Ascending aorta (tissue), 2 donors: ENCODE measurements at regions of chr5 and their contacts with region 1.

Region 1: GRCh38 chr5:78537821-78538220 is 110.8 kb downstream of the LHFPL2 start:
- DNase-seq: peak in 1 of 2 donors; percentile 63
- H3K4me3 ChIP-seq: no peak overlapping the region
- H3K27ac ChIP-seq: no peak overlapping the region
- H3K4me1 ChIP-seq: peaks cover 10 to 37% of the 10 kb centered on the region in 2 donors
- H3K27me3 ChIP-seq: no peaks in the 10 kb centered on the region
- CTCF ChIP-seq: peak; percentile 40 to 64 (median 44)

Region 2: DNA sequence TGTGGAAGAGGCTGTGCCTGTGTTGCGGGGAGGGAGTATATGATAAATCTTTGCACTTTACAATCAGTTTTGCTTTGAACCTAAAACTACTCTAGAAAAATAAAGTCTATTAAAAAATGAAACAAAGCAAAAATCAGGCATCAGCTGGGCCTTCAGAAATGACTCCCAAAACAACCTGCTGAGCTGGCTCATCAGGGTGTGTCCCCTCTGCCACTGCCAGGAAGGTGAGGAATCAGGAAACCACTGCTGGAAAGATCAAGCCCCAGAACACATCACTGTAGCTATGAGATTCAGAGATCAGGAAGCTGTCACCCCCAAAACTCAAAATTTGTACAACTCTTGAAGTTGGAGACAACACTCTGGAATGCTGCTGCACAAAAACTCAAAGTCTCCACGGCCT is 721.1 kb before region 1 on chr5:
- intact Hi-C with region 1: no loop called
- DNase-seq: no peak
- H3K4me3 ChIP-seq: no peak overlapping the region
- H3K27ac ChIP-seq: no peak overlapping the region
- H3K4me1 ChIP-seq: no peaks in the 10 kb centered on the region
- H3K27me3 ChIP-seq: no peaks in the 10 kb centered on the region
- CTCF ChIP-seq: no peak

Region 3: GRCh38 chr5:78467752-78468357 is 70.0 kb before region 1 on chr5:
- intact Hi-C with region 1: loop called (anchors 5 kb)
- DNase-seq: no peak
- H3K4me3 ChIP-seq: no peak overlapping the region
- H3K27ac ChIP-seq: no peak overlapping the region
- H3K4me1 ChIP-seq: no peaks in the 10 kb centered on the region
- H3K27me3 ChIP-seq: no peaks in the 10 kb centered on the region
- CTCF ChIP-seq: peak; percentile 73 to 85 (median 84)

Region 4: DNA sequence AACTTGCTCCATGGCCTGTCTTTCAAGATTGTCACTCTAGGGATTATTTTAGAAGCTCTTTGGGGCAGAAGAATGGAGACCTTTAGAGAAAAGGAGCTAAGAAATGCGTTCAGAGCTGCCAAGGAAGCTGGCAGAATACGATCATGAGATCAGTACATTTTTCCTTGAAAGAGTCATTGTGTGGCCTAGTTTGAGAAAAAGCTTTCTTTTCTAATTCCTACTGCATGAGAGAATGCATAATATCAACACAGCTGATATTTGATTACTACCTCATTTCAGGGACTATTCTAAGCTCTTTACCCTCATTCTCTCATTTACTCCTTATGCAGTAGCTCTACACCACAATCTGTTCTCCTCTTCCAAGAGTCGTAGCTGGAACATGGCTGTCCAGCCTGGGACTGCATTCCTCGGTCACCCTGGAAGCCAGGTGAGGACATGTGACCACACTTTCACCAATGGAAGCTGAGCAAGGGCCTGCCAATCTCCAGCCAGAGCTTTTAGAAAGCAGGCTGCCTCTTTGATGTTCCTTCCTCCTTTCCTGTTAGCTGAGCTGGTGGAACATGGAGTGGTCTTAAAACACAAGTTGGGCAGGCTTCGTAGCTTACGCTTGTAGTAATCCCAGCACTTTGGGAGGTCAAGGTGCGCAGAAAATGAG is 210.0 kb after region 1 on chr5:
- intact Hi-C with region 1: loop called (anchors 5 kb)
- DNase-seq: peak in 1 of 2 donors; percentile 68
- H3K4me3 ChIP-seq: no peak overlapping the region
- H3K27ac ChIP-seq: peak overlapping the region; percentile 79 to 92
- H3K4me1 ChIP-seq: peaks cover 10 to 24% of the 10 kb centered on the region in 2 donors
- H3K27me3 ChIP-seq: no peaks in the 10 kb centered on the region
- CTCF ChIP-seq: no peak

Region 5: GRCh38 chr5:78920604-78921003 is 382.8 kb after region 1 on chr5:
- intact Hi-C with region 1: loop called (anchors 5 kb)
- DNase-seq: no peak
- H3K4me3 ChIP-seq: no peak overlapping the region
- H3K27ac ChIP-seq: no peak overlapping the region
- H3K4me1 ChIP-seq: no peaks in the 10 kb centered on the region
- H3K27me3 ChIP-seq: no peaks in the 10 kb centered on the region
- CTCF ChIP-seq: peak in 2 of 3 experiments; percentile 15 to 47

Region 6: DNA sequence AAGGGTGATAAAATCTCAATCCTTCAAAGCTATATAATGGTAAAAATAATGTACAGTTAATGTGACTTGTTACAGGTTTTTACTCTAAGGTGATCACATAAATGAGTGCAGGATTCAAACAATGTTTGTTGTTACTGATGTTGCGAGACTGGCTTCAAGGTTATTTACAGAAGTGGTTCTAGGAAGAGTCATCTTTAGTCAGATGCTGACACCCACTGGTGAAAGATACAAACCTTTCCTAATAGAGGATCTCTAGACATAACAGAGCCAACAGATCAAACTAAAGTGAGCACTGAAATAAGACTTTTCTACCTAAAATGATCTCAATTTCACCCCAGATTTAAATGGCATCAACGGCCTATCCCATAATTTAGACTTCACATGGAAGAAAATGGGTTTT is 427.1 kb after region 1 on chr5:
- intact Hi-C with region 1: loop called (anchors 5 kb)
- DNase-seq: no peak
- H3K4me3 ChIP-seq: no peak overlapping the region
- H3K27ac ChIP-seq: no peak overlapping the region
- H3K4me1 ChIP-seq: no peaks in the 10 kb centered on the region
- H3K27me3 ChIP-seq: no peaks in the 10 kb centered on the region
- CTCF ChIP-seq: peak; percentile 35 to 50 (median 36)

Region 7: DNA sequence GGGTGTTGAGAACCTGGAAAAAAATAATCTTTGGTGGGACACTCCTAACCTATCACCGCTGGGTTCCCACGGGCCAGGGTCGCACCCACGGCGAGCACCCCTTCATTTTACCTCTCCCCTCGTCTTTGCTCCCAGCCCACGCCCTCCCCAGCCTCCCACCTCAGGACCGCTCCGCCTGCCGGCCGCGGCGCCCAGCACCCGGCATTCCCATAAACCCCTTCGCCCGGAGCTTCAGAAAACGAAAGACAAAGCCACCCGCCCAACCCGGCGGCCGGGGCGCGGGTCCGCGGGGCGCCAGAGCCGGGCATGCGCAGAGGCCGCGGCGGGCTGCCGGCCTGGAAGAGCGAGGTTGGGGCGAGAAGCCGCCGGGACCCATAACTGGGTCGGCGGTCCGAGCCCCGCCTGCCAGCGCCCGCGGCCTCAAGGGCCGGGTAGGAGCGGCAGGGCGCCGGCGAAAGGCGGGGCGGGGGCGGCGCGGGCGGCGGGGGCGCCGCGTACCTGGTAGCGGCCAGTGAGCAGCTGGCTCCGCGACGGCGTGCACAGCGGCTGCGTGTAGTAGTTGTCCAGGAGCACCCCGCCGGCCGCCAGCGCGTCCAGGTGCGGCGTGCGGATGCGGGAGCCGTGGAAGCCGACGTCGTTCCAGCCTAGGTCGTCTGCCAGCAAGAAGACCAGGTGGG is 446.8 kb after region 1 on chr5:
- intact Hi-C with region 1: loop called (anchors 5 kb)
- DNase-seq: peak; percentile 52 to 92
- H3K4me3 ChIP-seq: peak overlapping the region; percentile 89 to 95
- H3K27ac ChIP-seq: peak overlapping the region; percentile 96
- H3K4me1 ChIP-seq: peaks cover 0 to 12% of the 10 kb centered on the region in 2 donors
- H3K27me3 ChIP-seq: no peaks in the 10 kb centered on the region
- CTCF ChIP-seq: peak; percentile 28 to 48 (median 40)